ENCODE measurements at regions of chrX and their contacts with region 1.

Region 1: DNA sequence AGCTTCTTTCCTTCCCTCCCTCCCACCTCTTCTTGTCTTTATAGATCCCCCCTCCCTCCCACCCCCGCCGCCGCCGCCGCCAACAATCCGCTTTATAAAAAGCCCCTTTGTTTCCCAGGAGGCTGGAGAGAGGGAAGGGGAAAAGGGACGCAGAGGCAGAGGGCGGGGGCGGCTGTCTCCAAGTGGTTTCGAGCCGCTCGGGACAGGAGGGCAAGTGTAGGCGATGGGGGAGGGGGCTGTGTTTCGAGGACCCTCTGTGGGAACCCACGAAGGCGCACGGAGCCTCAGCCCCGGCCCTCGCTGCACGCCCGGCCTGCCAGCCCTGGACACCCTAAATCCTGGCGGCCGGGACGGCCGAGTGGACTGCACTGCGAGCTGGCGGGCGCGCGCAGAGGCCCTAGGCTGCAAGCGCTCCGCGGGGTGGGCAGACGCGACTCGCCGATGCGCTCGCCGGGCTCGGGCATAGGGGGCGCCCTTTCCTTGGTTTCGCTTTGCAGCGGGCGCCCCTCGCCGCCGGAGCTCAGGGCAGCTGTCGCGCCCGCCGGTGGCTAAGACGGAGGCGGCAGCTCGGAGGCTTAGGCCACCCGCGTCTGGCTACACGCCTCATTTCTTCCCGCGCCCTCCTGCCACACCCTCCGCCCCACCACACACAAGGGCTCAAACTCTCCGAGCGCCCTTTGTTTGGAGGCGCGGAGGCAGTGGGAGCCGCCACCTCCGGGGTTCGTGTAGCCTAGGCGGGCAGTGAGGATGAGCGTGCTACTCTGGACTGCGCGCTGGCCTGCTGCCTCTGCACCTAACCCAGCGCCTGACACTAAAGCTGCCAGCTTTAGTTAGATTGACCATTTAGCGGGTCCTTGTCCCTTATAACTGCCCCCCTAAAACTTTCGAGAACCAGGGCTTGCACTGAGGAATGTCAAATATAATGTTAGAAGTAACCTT is 2.2 kb downstream of the MAMLD1 start:
- DNase-seq: peak; percentile 87
- H3K4me3 ChIP-seq: peak overlapping the region; percentile 47 to 65 (median 61)
- H3K27ac ChIP-seq: peak overlapping the region; percentile 87 to 91 (median 90)
- H3K4me1 ChIP-seq: peaks cover 0 to 19% (median 12%) of the 10 kb centered on the region in 4 donors
- H3K27me3 ChIP-seq: no peaks in the 10 kb centered on the region
- CTCF ChIP-seq: peak; percentile 13 to 63 (median 46)
- EP300 ChIP-seq: no peak
- POLR2A ChIP-seq: peak in 1 of 2 donors; percentile 15

Region 2: GRCh38 chrX:149539283-149540130 is 825.8 kb before region 1 on chrX:
- intact Hi-C with region 1: loop called (anchors 10 kb)
- DNase-seq: peak; percentile 96
- H3K4me3 ChIP-seq: peak overlapping the region; percentile 33 to 64 (median 59)
- H3K27ac ChIP-seq: peak overlapping the region; percentile 87 to 89 (median 88)
- H3K4me1 ChIP-seq: peaks cover 0 to 8% (median 7%) of the 10 kb centered on the region in 4 donors
- H3K27me3 ChIP-seq: no peaks in the 10 kb centered on the region
- CTCF ChIP-seq: no peak
- EP300 ChIP-seq: no peak
- POLR2A ChIP-seq: no peak

Region 3: DNA sequence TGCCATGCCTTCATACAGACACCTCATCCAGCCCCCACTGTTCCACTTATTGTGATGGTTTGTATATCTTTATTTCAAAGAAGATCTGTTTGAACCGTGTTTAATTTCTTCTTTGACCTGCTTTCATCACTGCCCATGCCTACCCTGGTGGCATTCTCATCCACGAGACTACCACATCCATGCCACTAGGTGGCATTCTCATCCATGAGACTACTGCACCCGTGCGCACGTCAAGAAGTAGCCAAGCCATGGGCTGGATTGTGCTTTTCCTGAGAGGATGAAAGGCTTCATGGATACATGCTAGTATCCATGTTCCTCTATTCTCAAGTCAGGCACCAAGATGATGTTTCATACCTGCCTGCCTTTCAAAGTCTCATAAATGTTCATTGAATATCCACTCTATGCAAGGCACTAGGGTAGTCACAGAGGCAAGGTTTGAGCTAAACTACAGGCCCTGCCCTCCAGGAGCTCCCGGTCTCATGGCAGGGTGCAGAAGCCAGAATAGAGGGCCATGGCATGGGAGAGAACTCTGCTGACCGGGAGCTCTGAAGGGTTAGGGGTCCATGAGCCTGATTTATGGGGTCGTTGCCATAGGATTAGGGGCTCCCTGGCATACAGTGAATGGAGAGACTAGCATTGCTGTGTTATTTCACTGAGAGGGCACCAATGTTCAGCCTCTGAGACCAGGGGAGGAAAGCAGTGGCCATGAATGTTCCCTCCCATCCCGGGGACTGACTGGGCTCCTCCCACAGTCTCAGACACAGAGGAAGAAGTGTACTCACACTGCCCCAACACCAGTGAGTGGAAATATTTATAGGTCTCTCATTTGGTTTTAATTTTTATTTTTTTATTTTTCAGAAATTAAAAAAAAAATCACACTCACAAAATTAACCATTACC is 402.2 kb before region 1 on chrX:
- intact Hi-C with region 1: loop called (anchors 5 kb)
- DNase-seq: no peak
- H3K4me3 ChIP-seq: no peak overlapping the region
- H3K27ac ChIP-seq: no peak overlapping the region
- H3K4me1 ChIP-seq: no peaks in the 10 kb centered on the region
- H3K27me3 ChIP-seq: no peaks in the 10 kb centered on the region
- CTCF ChIP-seq: peak in 3 of 4 experiments; percentile 27 to 48 (median 35)
- EP300 ChIP-seq: no peak
- POLR2A ChIP-seq: no peak

Region 4: GRCh38 chrX:150269605-150270254 is 95.6 kb before region 1 on chrX:
- intact Hi-C with region 1: no loop called
- DNase-seq: no peak
- H3K4me3 ChIP-seq: no peak overlapping the region
- H3K27ac ChIP-seq: no peak overlapping the region
- H3K4me1 ChIP-seq: no peaks in the 10 kb centered on the region
- H3K27me3 ChIP-seq: no peaks in the 10 kb centered on the region
- CTCF ChIP-seq: no peak
- EP300 ChIP-seq: no peak
- POLR2A ChIP-seq: no peak

Region 5: DNA sequence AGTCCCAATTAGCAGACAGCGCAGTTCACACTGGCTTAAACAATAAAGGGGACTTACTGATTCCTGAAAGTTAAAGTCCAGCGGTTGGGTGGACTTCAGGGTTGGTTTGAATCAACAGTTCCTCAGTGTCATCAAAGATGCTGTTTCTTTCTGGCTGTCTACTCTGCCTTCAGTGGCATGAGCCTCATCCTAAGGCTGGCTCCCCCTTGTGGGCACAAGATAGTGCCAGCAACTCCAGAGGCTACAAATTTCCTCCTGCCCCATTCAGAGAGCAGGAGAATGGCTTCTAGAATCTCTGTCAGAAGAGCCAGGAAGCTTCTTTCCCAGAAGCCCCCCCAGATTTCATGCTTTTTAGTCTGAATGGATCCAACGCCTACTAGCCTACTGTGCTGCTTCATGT is 120.7 kb after region 1 on chrX:
- intact Hi-C with region 1: loop called (anchors 2 kb)
- DNase-seq: peak; percentile 74
- H3K4me3 ChIP-seq: no peak overlapping the region
- H3K27ac ChIP-seq: no peak overlapping the region
- H3K4me1 ChIP-seq: no peaks in the 10 kb centered on the region
- H3K27me3 ChIP-seq: no peaks in the 10 kb centered on the region
- CTCF ChIP-seq: peak in 3 of 4 experiments; percentile 21 to 46 (median 39)
- EP300 ChIP-seq: no peak
- POLR2A ChIP-seq: no peak

Region 6: DNA sequence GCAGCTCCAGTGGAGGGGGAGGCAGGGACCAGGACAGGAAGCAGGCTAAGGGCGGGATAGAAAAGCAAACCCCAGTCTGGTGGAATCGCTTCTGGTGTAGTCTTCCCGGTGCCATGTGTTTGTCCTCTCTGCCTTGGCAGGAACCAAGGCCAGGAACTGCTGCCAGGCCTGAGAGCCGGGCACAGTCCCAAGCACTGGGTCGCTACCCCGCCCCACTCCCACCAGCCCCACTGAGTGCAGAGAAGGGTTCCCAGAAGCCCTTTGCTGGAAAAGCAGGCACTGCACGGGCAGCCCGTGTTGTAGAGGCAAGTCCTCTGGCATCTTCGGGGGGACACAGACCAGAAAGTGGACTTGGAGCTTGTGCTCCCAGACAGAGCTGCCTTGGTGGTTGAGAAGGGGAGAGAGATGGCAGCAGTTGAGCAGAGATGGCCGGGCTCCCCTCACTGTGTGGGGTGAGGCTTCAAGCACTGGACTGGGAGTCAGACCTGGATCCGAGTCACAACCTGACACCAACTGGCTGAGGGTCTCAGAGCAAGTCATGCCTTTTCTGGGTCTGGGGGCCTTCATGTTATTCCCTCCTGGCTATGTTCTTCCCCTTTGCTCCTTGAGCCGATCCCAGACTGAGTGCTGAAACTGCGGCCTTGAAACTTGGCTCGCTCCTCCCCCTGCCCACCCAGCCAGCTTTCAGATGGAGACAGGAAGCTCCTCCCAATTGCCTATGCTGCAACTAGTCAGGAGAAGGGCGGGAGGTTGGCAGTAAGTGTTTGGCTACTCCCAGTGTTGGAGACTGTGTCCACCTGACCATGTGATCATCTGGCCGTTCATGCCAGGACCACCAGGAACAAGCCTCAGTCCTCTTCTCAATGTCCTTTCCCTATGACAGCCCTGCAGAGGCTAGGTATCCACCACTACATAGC is 143.4 kb after region 1 on chrX:
- intact Hi-C with region 1: loop called (anchors 5 kb)
- DNase-seq: peak; percentile 87
- H3K4me3 ChIP-seq: peak overlapping the region in 2 of 4 donors; percentile 14 to 19
- H3K27ac ChIP-seq: peak overlapping the region; percentile 67 to 79 (median 72)
- H3K4me1 ChIP-seq: peaks cover 0 to 9% (median 8%) of the 10 kb centered on the region in 4 donors
- H3K27me3 ChIP-seq: no peaks in the 10 kb centered on the region
- CTCF ChIP-seq: no peak
- EP300 ChIP-seq: no peak
- POLR2A ChIP-seq: no peak

Region 7: GRCh38 chrX:150568320-150569154 is 203.2 kb after region 1 on chrX and contains the start of gene MTM1:
- intact Hi-C with region 1: loop called (anchors 2 kb)
- DNase-seq: peak; percentile 97
- H3K4me3 ChIP-seq: peak within 1 kb of the TSS; percentile 46 to 78 (median 74)
- H3K27ac ChIP-seq: peak within 1 kb of the TSS; percentile 85 to 91 (median 91)
- H3K4me1 ChIP-seq: peaks cover 0 to 19% (median 7%) of the 10 kb centered on the region in 4 donors
- H3K27me3 ChIP-seq: no peaks in the 10 kb centered on the region
- CTCF ChIP-seq: no peak
- EP300 ChIP-seq: peak in 1 of 4 donors; percentile 21
- POLR2A ChIP-seq: peak; percentile 28 to 58
- total RNA-seq, gene MTM1: 14.4 to 23.5 (median 17.5) TPM

Region 8: GRCh38 chrX:150683536-150684146 is 318.3 kb after region 1 on chrX:
- intact Hi-C with region 1: no loop called
- DNase-seq: no peak
- H3K4me3 ChIP-seq: no peak overlapping the region
- H3K27ac ChIP-seq: no peak overlapping the region
- H3K4me1 ChIP-seq: no peaks in the 10 kb centered on the region
- H3K27me3 ChIP-seq: no peaks in the 10 kb centered on the region
- CTCF ChIP-seq: peak in 2 of 4 experiments; percentile 25 to 42
- EP300 ChIP-seq: no peak
- POLR2A ChIP-seq: no peak

Region 9: DNA sequence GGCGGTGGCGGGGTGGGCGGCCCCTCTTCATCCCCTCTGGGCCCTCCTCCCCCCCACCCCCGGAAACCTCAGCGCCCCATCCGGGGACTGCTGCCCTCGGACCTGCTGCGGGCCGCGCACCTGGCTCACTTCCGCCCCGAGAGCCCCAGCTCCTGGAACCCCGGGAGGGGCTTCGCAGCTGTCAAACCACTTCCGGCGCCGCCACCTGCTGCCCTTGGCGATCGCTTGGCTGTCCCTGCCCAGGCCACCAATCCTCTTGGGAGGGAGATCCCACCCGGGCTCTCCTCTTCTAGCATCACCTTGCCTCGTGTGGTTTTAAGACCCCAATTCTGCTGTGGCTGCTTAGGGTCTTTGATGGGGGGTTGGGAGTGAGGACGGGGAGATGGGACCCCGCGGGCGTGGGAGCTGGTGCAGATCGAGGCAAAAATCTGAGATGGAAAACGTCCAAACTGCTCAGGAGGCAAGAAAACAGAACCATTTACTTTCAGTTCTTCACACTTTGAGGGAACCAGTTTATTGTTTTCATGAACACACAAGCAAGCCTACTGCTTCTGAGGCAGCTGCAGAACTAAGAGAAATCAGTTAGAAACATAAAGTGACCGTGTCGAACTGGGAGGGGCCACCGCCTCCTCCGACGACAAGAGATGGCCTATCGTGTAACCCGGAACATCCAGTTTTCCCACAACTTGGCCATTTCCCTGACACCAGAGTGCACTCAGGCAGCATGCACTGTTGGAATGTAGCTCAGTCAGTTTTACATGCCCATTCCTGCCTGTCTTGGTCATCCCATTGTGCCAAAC is 328.7 kb after region 1 on chrX:
- intact Hi-C with region 1: loop called (anchors 10 kb)
- DNase-seq: peak; percentile 69
- H3K4me3 ChIP-seq: peak overlapping the region; percentile 38 to 64 (median 59)
- H3K27ac ChIP-seq: peak overlapping the region; percentile 81 to 86 (median 84)
- H3K4me1 ChIP-seq: peaks cover 0 to 6% (median 0%) of the 10 kb centered on the region in 4 donors
- H3K27me3 ChIP-seq: no peaks in the 10 kb centered on the region
- CTCF ChIP-seq: no peak
- EP300 ChIP-seq: no peak
- POLR2A ChIP-seq: no peak